AG04449 (cell line): ENCODE measurements at regions of chr22 and their contacts with region 1.

Region 1: GRCh38 chr22:36331306-36331911 is 56.4 kb downstream of the MYH9 start:
- DNase-seq: peak; percentile 86
- H3K4me3 ChIP-seq: no peak overlapping the region
- CTCF ChIP-seq: no peak

Region 2: DNA sequence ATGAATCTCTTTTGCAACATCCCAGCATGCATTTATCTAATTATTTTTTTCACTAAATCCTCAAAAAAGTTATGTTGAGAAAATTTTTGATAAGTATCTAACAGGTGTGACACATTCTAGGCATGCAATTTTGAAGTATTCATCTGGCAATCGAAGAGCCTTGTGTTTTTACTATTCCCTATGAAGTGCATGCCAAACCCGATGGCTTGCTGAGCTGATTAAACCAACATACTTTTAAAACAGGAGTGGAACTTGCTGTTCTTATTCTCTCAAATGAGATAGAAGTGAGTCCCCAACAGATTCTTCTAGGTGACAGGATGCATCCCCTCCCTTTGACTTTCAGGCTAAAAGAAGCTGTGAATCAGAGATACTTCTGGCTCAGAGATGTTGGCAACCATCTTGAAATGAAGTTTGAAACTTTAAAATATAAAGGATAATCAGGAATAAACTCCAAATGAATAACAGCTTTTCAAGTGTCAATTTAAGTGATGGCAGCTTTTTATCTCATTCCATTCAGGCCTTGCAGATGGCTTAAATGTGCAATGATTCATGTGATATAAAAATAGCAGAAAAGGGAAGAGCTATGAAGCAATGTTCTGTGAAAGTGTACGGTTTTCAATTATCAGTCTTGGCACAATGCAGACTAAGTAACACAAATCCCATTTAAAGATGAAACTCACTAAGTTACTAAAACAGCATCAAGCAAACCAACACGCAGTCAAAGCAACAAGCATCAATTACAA is 546.1 kb before region 1 on chr22:
- CTCF ChIA-PET with region 1: no interaction called
- POLR2A ChIA-PET with region 1: no interaction called
- DNase-seq: peak; percentile 37
- H3K4me3 ChIP-seq: no peak overlapping the region
- CTCF ChIP-seq: no peak

Region 3: DNA sequence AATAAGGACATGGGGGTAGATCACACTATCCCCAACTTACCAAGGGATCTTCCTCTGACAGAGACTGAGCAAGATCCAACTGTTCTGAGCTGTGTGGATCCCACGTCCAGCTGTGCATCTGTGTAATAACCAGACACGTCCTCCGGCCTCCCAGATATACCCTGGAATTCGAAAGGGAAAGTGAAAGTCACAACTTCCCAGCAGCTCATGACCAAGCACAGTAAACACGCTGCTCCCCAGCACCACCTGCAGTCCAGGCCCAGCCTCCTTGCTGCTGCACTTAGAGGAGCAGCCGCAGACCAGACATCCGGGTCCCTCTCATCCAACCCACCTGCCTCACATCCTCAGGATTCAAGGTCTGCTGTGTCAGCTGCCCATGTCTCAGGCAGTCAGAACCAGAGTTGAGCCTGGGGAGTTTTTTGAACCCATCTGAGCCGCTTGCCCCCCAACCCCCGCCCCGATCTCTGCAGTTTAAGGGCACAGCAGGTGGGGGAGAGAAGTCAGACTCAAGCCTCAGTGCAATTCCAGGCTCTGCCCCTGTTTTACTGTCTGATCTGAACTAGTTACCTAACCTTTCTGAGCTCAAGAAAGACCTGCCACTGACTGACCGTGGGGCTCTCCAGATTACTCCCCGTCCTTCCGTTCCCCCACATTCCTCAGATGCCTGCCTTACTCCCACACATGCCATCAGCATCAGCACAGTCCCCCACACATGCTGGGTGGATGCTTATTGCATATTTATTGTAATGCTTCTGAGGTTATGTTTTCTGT is 91.8 kb before region 1 on chr22 and contains the start of gene APOL2:
- CTCF ChIA-PET with region 1: no interaction called
- POLR2A ChIA-PET with region 1: no interaction called
- DNase-seq: peak; percentile 67
- H3K4me3 ChIP-seq: peak within 1 kb of the TSS; percentile 75
- CTCF ChIP-seq: peak; percentile 83

Region 4: DNA sequence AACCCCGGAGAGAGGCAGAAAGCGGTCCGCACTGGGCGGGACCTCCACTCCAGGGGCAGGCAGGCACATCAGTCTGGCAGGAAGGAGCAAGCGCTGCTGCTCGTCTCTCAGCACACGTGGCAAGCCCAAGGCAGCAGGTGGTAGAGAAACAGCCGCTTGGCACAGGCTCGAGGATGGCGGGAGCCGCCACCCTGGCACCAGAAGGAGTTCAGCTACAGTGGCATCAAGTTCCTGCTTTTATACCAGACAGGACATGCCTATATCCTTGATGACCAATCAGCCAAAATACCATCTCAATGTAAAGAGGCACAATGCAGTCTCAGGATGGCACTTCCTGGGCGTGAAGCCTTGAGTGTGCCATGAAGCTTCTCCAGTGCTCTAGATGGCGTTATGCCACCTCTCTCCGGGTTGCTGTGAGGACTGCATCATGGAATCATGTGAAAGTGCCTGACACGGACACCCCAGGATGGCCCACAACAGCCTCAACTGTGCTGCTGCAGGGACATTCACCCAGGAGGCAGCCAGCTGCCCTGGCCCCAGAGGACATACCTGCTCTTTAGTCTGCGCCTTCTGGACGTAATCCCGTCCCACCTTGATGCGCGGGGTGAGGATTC is 13.6 kb before region 1 on chr22:
- CTCF ChIA-PET with region 1: no interaction called
- POLR2A ChIA-PET with region 1: no interaction called
- DNase-seq: no peak
- H3K4me3 ChIP-seq: no peak overlapping the region
- CTCF ChIP-seq: no peak

Region 5: GRCh38 chr22:36365020-36365411 is 33.6 kb after region 1 on chr22:
- CTCF ChIA-PET with region 1: no interaction called
- POLR2A ChIA-PET with region 1: interaction called, 12 read pairs
- DNase-seq: peak; percentile 52
- H3K4me3 ChIP-seq: no peak overlapping the region; the same call in 1 of the 2 replicates
- CTCF ChIP-seq: no peak

Region 6: DNA sequence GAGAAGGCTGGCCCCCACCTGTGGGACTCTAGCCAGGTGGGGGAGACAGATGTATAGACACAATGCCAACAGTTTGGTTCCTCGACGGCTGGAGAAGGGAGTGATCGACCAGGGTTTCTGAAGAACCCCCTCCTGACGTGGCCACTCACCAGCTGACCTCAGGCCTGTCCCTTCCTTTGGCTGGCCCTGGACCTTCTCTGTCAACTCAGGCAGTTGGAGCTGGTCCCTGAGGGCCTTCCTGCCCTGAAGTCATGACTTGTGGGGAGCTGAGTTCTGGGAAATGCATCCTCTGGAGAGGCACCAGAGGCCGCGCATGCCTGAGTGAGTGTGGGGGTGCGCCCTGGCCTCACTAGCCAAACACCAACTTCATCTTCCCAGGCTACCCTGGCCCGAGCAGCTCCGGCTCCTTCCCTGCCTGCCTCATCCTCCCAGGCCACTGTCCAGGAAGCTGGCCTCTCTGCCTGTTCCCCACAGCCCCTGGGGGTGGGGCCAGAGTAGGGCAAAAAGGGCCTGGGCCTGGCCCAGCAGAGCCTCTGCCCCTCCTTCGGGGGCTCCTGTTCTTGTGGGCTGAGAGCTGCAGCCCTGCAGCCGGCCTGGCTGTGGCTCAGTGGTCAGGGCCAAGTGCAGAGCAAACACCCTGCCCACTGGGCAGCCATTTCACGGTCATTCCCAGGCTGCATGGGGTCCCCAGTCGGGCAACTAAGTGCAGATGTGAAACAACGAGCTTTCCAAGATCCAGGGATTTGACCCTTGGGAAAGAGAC is 126.5 kb after region 1 on chr22:
- CTCF ChIA-PET with region 1: no interaction called
- POLR2A ChIA-PET with region 1: no interaction called
- DNase-seq: no peak
- H3K4me3 ChIP-seq: no peak overlapping the region
- CTCF ChIP-seq: no peak